Activated naive CD4-positive, alpha-beta T cell treated with anti-CD3 and anti-CD28 coated beads for 36 hours (primary cell): ENCODE measurements at regions of chr10 and their contacts with region 1.

Region 1: DNA sequence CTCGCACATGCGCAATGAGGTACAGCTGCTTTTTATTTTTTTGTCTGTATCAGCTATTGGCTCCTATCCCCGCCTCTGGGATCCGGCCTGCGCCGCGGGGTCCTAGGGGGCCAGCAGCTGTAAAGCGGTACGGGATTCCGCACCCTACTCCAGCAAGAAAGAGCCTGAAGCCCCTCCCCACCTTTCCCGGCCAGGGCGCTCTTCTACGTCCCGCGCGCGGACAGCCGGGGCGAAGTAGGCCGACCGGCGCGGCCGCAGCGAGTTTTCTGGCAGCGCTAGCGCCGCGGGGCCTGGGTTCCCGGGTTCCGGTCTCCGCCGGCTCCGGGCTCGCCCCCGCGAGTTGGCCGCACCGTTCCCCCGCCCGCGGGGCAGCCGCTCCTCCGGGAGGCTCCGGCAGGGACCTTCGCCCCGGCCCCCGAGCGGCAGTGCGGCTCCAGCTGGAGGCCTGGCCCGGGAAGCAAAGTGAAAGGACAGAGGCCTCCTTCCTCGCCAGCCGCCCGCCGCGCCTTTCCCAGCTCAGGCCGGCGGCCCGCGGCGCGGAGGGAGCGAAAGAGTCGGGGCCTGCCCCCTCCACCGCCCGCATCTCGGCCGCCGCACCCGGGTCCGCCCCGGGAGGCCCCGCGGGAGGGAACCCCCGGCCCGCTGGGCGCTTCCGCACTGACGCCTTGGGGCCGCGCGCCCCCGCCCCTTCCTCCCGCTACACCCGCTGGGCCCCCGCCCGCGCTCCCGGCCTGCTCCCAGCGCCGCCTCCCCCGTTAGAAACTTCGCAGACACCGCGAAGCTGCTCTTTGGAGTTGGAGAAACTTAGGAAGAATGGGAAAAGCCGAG is 4.7 kb upstream of the SPAG6 start:
- DNase-seq: peak; percentile 63
- H3K4me3 Mint-ChIP-seq: peak overlapping the region; percentile 88
- H3K27ac Mint-ChIP-seq: peak overlapping the region; percentile 74
- H3K4me1 Mint-ChIP-seq: peaks cover 19% of the 10 kb centered on the region
- H3K27me3 Mint-ChIP-seq: peaks cover 69% of the 10 kb centered on the region

Region 2: GRCh38 chr10:21525367-21526183 is 815.0 kb before region 1 on chr10 and contains the start of gene SKIDA1:
- CTCF ChIA-PET with region 1: no interaction called
- intact Hi-C with region 1: loop called (anchors 2 kb)
- DNase-seq: peak; percentile 72
- H3K4me3 Mint-ChIP-seq: peak within 1 kb of the TSS; percentile 94
- H3K27ac Mint-ChIP-seq: peak within 1 kb of the TSS; percentile 92
- H3K4me1 Mint-ChIP-seq: peaks cover 22% of the 10 kb centered on the region
- H3K27me3 Mint-ChIP-seq: peaks cover 28% of the 10 kb centered on the region
- total RNA-seq, gene SKIDA1: 0.10 TPM in 1 of 2 experiments, not detected in the other

Region 3: DNA sequence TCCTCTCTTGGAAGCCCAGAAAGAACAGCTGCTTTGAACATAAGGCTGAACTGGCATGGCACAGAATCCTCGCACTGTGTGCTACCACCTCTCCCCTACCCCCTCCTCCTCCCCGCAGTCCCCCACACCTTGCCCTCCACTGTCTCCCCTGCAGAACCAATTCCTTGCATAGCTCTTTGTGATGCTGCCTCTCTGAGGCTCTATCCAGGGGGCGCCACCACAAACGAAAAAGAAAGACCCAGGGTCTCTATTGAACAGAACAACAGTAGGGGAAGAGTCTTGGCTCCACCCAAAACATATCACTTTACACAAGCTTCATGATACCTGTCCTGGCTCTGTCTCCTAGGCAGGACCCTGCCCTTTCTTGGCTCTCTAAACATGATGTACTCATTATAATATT is 96.6 kb before region 1 on chr10:
- CTCF ChIA-PET with region 1: no interaction called
- intact Hi-C with region 1: loop called (anchors 1 kb)
- DNase-seq: no peak
- H3K4me3 Mint-ChIP-seq: no peak overlapping the region
- H3K27ac Mint-ChIP-seq: no peak overlapping the region
- H3K4me1 Mint-ChIP-seq: peaks cover 40% of the 10 kb centered on the region
- H3K27me3 Mint-ChIP-seq: no peaks in the 10 kb centered on the region

Region 4: DNA sequence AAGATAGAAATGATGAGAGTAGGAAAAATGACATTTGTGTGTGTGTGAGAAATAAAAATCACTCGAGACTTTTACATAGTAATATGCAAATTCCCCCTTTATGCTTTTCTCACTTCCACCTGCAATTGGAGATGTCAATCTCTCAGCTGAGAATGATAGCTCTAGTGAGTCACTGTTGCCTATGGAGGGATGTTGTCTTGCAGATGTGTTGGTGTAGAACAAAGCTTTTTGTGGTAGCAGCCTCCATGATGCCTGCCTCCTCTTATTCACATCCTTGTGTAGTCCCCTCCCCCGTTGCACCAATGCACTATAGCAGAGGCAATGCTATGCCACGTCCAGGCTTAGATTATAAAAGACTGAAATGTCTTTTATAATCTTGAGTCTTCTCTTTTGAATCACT is 38.5 kb after region 1 on chr10:
- CTCF ChIA-PET with region 1: no interaction called
- intact Hi-C with region 1: loop called (anchors 1 kb)
- DNase-seq: peak; percentile 75
- H3K4me3 Mint-ChIP-seq: no peak overlapping the region
- H3K27ac Mint-ChIP-seq: no peak overlapping the region
- H3K4me1 Mint-ChIP-seq: peaks cover 17% of the 10 kb centered on the region
- H3K27me3 Mint-ChIP-seq: peaks cover 3% of the 10 kb centered on the region

Region 5: GRCh38 chr10:22475651-22476600 is 135.3 kb after region 1 on chr10:
- CTCF ChIA-PET with region 1: no interaction called
- intact Hi-C with region 1: loop called (anchors 5 kb)
- DNase-seq: peak; percentile 36
- H3K4me3 Mint-ChIP-seq: peak overlapping the region; percentile 84
- H3K27ac Mint-ChIP-seq: no peak overlapping the region
- H3K4me1 Mint-ChIP-seq: peaks cover 9% of the 10 kb centered on the region
- H3K27me3 Mint-ChIP-seq: peaks cover 54% of the 10 kb centered on the region

Region 6: GRCh38 chr10:23095404-23095965 is 754.9 kb after region 1 on chr10 and contains the start of gene MSRB2:
- CTCF ChIA-PET with region 1: no interaction called
- intact Hi-C with region 1: loop called (anchors 10 kb)
- DNase-seq: peak; percentile 92
- H3K4me3 Mint-ChIP-seq: peak within 1 kb of the TSS; percentile 97
- H3K27ac Mint-ChIP-seq: peak within 1 kb of the TSS; percentile 90
- H3K4me1 Mint-ChIP-seq: peaks cover 34% of the 10 kb centered on the region
- H3K27me3 Mint-ChIP-seq: no peaks in the 10 kb centered on the region
- total RNA-seq, gene MSRB2: 13.9 to 16.0 TPM